Prostate gland (tissue), 2 donors: ENCODE measurements at regions of chr5 and their contacts with region 1.

Region 1: DNA sequence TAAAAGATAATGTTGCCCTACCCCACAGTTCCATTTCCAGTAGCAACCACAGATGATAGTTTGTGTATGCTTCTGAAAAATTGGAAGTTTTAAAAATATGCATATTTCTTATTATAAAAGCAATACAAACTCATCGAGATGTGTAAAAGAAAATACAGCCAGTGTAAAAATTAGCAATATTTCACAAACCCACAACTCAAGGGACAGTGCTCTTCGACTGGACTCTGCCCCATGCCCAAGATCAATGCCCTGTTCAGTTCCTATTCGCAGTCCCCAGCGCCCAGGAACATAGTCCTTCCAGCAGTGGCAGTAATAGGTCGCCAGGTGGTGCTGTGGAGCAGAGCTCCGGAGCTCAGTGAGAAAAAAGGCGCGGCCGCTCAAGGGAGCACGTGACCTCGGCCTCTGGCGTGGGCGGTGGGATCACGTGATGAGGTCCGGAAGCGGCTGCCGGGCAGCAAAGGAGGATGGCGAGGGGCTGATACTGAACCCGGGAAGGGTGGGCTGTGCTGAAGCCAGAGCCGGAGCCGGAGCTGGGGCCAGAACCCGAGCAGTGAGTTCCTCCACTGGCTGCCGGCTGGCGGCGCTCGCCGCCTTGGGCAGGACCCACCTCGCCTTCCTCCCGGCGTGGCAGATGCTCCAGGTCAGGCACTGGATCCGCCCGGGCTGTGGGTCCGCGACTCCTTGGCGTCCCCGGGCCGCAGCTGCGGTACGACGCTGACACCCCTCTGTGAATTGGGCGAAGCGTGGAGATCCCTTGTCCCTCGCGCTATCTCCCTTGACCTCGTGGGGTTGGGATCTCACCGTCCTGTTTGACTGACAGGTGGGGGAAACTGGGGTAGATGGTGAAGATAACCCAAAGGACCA is at the start of gene SLC36A1:
- DNase-seq: peak; percentile 92
- H3K4me3 ChIP-seq: peak within 1 kb of the TSS; percentile 59 to 69
- H3K27ac ChIP-seq: peak within 1 kb of the TSS; percentile 58 to 65
- H3K4me1 ChIP-seq: no peaks in the 10 kb centered on the region
- H3K27me3 ChIP-seq: no peaks in the 10 kb centered on the region
- CTCF ChIP-seq: peak; percentile 96 to 99 (median 98)
- POLR2A ChIP-seq: peak; percentile 40
- total RNA-seq, gene SLC36A1: 7.7 to 37.7 TPM

Region 2: GRCh38 chr5:151499501-151500035 is 52.2 kb after region 1 on chr5:
- intact Hi-C with region 1: loop called (anchors 2 kb)
- DNase-seq: no peak
- H3K4me3 ChIP-seq: no peak overlapping the region
- H3K27ac ChIP-seq: no peak overlapping the region
- H3K4me1 ChIP-seq: no peaks in the 10 kb centered on the region
- H3K27me3 ChIP-seq: no peaks in the 10 kb centered on the region
- CTCF ChIP-seq: no peak
- POLR2A ChIP-seq: no peak

Region 3: GRCh38 chr5:151651997-151652645 is 204.7 kb after region 1 on chr5:
- intact Hi-C with region 1: loop called (anchors 2 kb)
- DNase-seq: peak; percentile 76
- H3K4me3 ChIP-seq: no peak overlapping the region
- H3K27ac ChIP-seq: no peak overlapping the region
- H3K4me1 ChIP-seq: no peaks in the 10 kb centered on the region
- H3K27me3 ChIP-seq: no peaks in the 10 kb centered on the region
- CTCF ChIP-seq: peak; percentile 53 to 90 (median 72)
- POLR2A ChIP-seq: no peak

Region 4: GRCh38 chr5:151740336-151740942 is 293.0 kb after region 1 on chr5:
- intact Hi-C with region 1: loop called (anchors 5 kb)
- DNase-seq: peak; percentile 39
- H3K4me3 ChIP-seq: no peak overlapping the region
- H3K27ac ChIP-seq: peak overlapping the region; percentile 27 to 36
- H3K4me1 ChIP-seq: no peaks in the 10 kb centered on the region
- H3K27me3 ChIP-seq: no peaks in the 10 kb centered on the region
- CTCF ChIP-seq: peak; percentile 77 to 84 (median 82)
- POLR2A ChIP-seq: no peak